ENCODE measurements at regions of chr1 and their contacts with region 1.

Region 1: GRCh38 chr1:186482661-186483255 is 21.8 kb upstream of the PDC start:
- DNase-seq: peak in 7 of 9 donors; percentile 3 to 40 (median 14)
- ATAC-seq: peak; percentile 63
- H3K4me3 ChIP-seq: no peak overlapping the region
- H3K4me3 Mint-ChIP-seq: no peak overlapping the region
- H3K27ac ChIP-seq: no peak overlapping the region
- H3K27ac Mint-ChIP-seq: peak overlapping the region in 1 of 9 donors; percentile 6
- H3K4me1 ChIP-seq: no peaks in the 10 kb centered on the region
- H3K4me1 Mint-ChIP-seq: no peaks in the 10 kb centered on the region
- H3K27me3 ChIP-seq: no peaks in the 10 kb centered on the region
- H3K27me3 Mint-ChIP-seq: peaks cover 0 to 25% (median 0%) of the 10 kb centered on the region in 5 donors

Region 2: GRCh38 chr1:186605762-186606350 is 123.1 kb after region 1 on chr1:
- CTCF ChIA-PET with region 1: no interaction called
- POLR2A ChIA-PET with region 1: no interaction called
- intact Hi-C with region 1: loop called in 1 of 2 experiments (anchors 2 kb)
- DNase-seq: peak in 4 of 9 donors; percentile 6 to 36 (median 18)
- ATAC-seq: peak; percentile 54
- H3K4me3 ChIP-seq: no peak overlapping the region
- H3K4me3 Mint-ChIP-seq: no peak overlapping the region
- H3K27ac ChIP-seq: no peak overlapping the region
- H3K27ac Mint-ChIP-seq: no peak overlapping the region
- H3K4me1 ChIP-seq: no peaks in the 10 kb centered on the region
- H3K4me1 Mint-ChIP-seq: no peaks in the 10 kb centered on the region
- H3K27me3 ChIP-seq: no peaks in the 10 kb centered on the region
- H3K27me3 Mint-ChIP-seq: peaks cover 14 to 64% (median 35%) of the 10 kb centered on the region in 5 donors

Region 3: GRCh38 chr1:186680245-186681061 is 197.7 kb after region 1 on chr1 and contains the start of gene PTGS2:
- CTCF ChIA-PET with region 1: no interaction called
- POLR2A ChIA-PET with region 1: no interaction called
- intact Hi-C with region 1: loop called in 1 of 2 experiments (anchors 2 kb)
- DNase-seq: peak in 7 of 9 donors; percentile 0 to 49 (median 5)
- ATAC-seq: peak; percentile 94
- H3K4me3 ChIP-seq: no peak within 1 kb of the TSS
- H3K4me3 Mint-ChIP-seq: peak within 1 kb of the TSS; percentile 52 to 86 (median 76)
- H3K27ac ChIP-seq: no peak within 1 kb of the TSS
- H3K27ac Mint-ChIP-seq: no peak within 1 kb of the TSS
- H3K4me1 ChIP-seq: no peaks in the 10 kb centered on the region
- H3K4me1 Mint-ChIP-seq: peaks cover 6 to 22% (median 16%) of the 10 kb centered on the region in 7 donors
- H3K27me3 ChIP-seq: peaks cover 0 to 4% of the 10 kb centered on the region in 2 donors
- H3K27me3 Mint-ChIP-seq: peaks cover 54 to 72% (median 66%) of the 10 kb centered on the region in 5 donors
- total RNA-seq, gene PTGS2: 0.17 to 73.8 (median 21.8) TPM in 3 of 5 experiments, not detected in the others